ENCODE measurements at regions of chr1 and their contacts with region 1.

Region 1: DNA sequence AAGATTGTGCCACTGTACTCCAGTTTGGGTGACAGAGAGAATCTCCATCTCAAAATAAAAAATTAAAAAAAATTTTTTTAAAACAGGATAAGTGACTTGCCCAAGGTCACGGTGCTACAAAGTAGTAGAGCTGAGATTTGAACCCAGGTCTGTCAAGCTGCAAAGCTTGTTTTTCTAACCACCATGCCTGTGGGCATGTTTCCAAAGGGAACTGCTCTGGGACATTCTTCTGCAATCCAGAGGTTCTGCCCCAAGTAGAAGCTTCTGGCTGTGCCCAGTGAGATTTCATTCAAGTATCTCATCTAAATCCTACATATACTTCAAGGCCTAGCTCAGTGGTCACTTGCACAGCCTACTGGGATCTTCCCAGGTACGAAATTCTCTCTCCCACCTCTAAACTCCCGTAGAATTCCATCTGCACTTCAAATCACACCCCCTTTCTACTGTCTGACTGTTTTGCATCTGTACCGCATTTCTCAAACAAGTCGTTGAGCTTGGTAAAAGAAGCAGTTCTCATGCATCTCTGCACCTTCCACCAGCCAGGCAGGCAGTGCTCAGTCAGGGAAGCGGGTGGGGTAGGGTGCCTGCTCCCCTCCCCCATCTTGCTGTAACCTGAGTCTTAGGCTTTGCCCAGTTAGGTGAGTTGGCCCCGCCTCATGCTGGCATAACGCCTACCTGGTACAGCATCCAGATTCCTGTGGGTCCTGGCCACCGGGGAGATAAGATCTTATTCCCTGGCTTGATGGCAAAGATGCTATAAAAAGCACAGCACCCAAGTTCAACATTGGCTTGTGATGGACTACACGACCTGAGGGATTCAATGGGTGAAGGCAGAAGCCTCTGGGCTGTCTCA is 13.5 kb downstream of the SLC9A1 start:
- DNase-seq: no peak
- ATAC-seq: no peak
- H3K4me3 ChIP-seq: no peak overlapping the region
- H3K27ac ChIP-seq: peak overlapping the region in 4 of 10 donors; percentile 35 to 81 (median 63)
- H3K4me1 ChIP-seq: peaks cover 38 to 100% (median 89%) of the 10 kb centered on the region in 9 donors
- H3K27me3 ChIP-seq: no peaks in the 10 kb centered on the region
- CTCF ChIP-seq: no peak

Region 2: GRCh38 chr1:26697978-26698849 is 443.2 kb before region 1 on chr1:
- intact Hi-C with region 1: no loop called
- DNase-seq: peak; percentile 33 to 67
- ATAC-seq: peak; percentile 19 to 78 (median 62)
- H3K4me3 ChIP-seq: peak overlapping the region; percentile 72 to 96 (median 92)
- H3K27ac ChIP-seq: peak overlapping the region; percentile 93 to 99 (median 98)
- H3K4me1 ChIP-seq: peaks cover 18 to 78% (median 70%) of the 10 kb centered on the region in 9 donors
- H3K27me3 ChIP-seq: no peaks in the 10 kb centered on the region
- CTCF ChIP-seq: no peak

Region 3: GRCh38 chr1:26993237-26994019 is 147.9 kb before region 1 on chr1 and contains the start of gene TRNP1:
- intact Hi-C with region 1: no loop called
- DNase-seq: peak; percentile 59 to 82
- ATAC-seq: peak; percentile 60 to 79 (median 68)
- H3K4me3 ChIP-seq: peak within 1 kb of the TSS; percentile 53 to 85 (median 70)
- H3K27ac ChIP-seq: peak within 1 kb of the TSS; percentile 27 to 82 (median 58)
- H3K4me1 ChIP-seq: peaks cover 13 to 36% (median 30%) of the 10 kb centered on the region in 9 donors
- H3K27me3 ChIP-seq: peaks cover 0 to 67% (median 45%) of the 10 kb centered on the region in 7 donors
- CTCF ChIP-seq: no peak
- total RNA-seq, gene TRNP1: 11.9 to 32.5 (median 22.3) TPM

Region 4: DNA sequence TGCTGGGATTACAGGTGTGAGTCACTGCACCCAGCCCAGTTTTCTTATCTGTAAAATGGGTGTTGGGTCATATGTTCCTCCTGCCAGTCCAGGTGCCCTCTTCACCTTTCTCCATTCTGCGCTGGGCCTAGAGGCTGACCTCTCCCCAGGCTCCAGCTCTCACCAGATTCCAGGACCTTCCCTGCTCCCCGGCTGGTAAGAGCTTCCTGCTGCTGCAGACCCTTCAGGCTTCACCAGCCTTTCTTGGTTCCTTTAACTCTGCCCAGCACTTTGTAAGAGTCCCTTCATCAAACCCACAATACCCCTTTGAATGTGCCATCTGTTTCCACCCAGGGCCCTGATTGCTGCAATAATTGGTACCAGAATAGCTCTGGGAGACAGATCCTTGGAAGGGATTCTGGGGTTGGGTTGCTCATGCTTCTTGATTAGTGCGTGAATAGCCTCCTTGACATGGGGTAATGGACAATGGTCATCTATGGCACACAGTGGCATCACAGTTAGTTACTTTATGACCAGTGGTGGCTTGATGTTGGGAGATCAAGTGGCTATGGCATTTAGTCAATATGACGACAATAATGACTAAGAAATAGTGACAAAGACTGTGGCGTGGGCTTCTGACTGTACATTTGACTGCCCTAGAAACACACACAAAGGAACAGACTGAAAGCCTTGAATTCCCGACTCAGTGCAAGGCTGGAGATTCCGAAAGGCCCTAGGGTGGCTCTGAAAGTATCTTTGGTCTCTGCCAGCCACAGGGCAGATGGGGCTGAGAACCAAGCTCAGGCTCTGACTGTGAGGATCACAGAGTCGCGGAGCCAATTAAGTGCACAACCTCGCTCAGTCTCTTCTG is 53.8 kb before region 1 on chr1:
- intact Hi-C with region 1: no loop called
- DNase-seq: no peak
- ATAC-seq: no peak
- H3K4me3 ChIP-seq: no peak overlapping the region
- H3K27ac ChIP-seq: no peak overlapping the region
- H3K4me1 ChIP-seq: no peaks in the 10 kb centered on the region
- H3K27me3 ChIP-seq: no peaks in the 10 kb centered on the region
- CTCF ChIP-seq: no peak

Region 5: DNA sequence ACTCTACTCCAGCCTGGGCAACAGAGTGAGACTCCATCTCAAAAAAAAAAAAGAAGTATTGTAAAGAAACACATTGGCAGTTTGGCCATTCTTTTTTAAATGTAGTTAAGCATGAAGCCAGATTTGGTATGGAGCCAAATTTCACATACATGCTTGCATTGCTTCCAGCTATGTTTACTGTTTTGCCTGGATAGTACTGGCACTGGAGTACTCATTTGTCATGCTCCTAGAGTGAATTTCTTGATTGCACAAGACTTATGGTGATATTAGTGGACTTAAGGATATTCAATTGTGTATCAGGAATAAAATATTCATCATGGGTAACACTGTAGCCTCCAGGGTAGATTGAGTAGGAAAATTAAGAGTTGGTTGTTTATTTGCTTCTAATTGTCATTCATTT is 38.0 kb after region 1 on chr1:
- intact Hi-C with region 1: loop called in 1 of 10 experiments (anchors 2 kb)
- DNase-seq: no peak
- ATAC-seq: no peak
- H3K4me3 ChIP-seq: no peak overlapping the region
- H3K27ac ChIP-seq: no peak overlapping the region
- H3K4me1 ChIP-seq: no peaks in the 10 kb centered on the region
- H3K27me3 ChIP-seq: no peaks in the 10 kb centered on the region
- CTCF ChIP-seq: no peak

Measured in heart right ventricle (tissue), 16 donors.